Activated T-helper 1 cell treated with anti-CD3 and anti-CD28 coated beads, Interleukin-12 subunit alpha, Interleukin-12 subunit beta, Interleukin-2, Interleukin-4 antibody, amounts not matched to agents 30 ng/mL and 10 ng/mL and 1 ng/mL, durations not matched to agents 14 hours and 24 hours and 36 hours (primary cell): ENCODE measurements at regions of chr20 and their contacts with region 1.

Region 1: GRCh38 chr20:9279918-9280401 is 211.1 kb downstream of the PLCB4 start:
- DNase-seq: no peak
- H3K4me3 Mint-ChIP-seq: no peak overlapping the region
- H3K27ac Mint-ChIP-seq: no peak overlapping the region
- H3K4me1 Mint-ChIP-seq: no peaks in the 10 kb centered on the region
- H3K27me3 Mint-ChIP-seq: no peaks in the 10 kb centered on the region

Region 2: GRCh38 chr20:9262653-9263194 is 17.2 kb before region 1 on chr20:
- intact Hi-C with region 1: no loop called
- DNase-seq: no peak
- H3K4me3 Mint-ChIP-seq: no peak overlapping the region
- H3K27ac Mint-ChIP-seq: no peak overlapping the region
- H3K4me1 Mint-ChIP-seq: no peaks in the 10 kb centered on the region
- H3K27me3 Mint-ChIP-seq: no peaks in the 10 kb centered on the region

Region 3: GRCh38 chr20:9329356-9330101 is 49.6 kb after region 1 on chr20:
- intact Hi-C with region 1: loop called (anchors 5 kb)
- DNase-seq: no peak
- H3K4me3 Mint-ChIP-seq: no peak overlapping the region
- H3K27ac Mint-ChIP-seq: no peak overlapping the region
- H3K4me1 Mint-ChIP-seq: no peaks in the 10 kb centered on the region
- H3K27me3 Mint-ChIP-seq: peaks cover 1% of the 10 kb centered on the region